Activated CD4-positive, alpha-beta T cell treated with anti-CD3 and anti-CD28 coated beads for 36 hours (primary cell): ENCODE measurements at regions of chr1 and their contacts with region 1.

Region 1: GRCh38 chr1:154936555-154937084 is at the start of gene PMVK:
- DNase-seq: peak; percentile 97
- ATAC-seq: peak; percentile 80
- H3K4me3 Mint-ChIP-seq: peak within 1 kb of the TSS; percentile 95
- H3K27ac Mint-ChIP-seq: peak within 1 kb of the TSS; percentile 96
- H3K4me1 Mint-ChIP-seq: peaks cover 54% of the 10 kb centered on the region
- H3K27me3 Mint-ChIP-seq: no peaks in the 10 kb centered on the region
- total RNA-seq, gene PMVK: 17.0 to 36.9 TPM

Region 2: DNA sequence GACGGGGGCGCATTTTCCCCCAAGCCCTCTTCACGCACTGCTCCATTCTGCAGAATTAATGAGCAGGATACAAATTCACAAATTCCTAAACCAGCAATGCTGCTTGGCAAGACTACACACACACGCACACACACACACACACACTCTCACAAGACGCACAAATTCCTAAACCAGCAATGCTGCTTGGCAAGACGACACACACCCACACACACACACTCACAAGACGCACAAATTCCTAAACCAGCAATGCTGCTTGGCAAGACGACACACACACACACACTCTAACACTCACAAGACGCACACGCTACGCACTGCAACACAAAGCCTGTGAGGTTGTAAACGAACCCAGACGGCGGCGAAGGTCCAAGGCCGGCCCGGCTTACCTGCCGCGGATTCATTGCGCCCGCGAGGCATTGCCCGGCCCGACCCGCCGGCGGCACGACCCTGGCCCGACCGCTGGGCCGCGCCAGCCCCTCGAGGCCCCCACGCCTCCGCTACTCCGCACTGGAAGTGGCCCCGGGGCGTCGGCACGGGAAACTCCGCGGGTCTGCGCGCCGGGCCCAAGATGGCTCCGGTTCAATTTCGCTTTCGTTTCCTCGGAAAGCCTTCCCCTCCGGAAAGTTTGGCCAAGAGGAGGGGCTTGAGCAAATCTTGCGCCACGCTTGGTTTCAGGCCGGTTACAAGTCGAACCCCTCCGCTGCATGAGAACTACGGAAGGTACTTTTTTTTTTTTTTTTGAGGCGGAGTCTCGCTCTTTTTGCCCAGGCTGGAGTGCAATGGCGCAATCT is 328.8 kb before region 1 on chr1 and contains the start of gene ADAR:
- CTCF ChIA-PET with region 1: no interaction called
- POLR2A ChIA-PET with region 1: no interaction called
- intact Hi-C with region 1: loop called (anchors 1 to 2 kb)
- DNase-seq: peak; percentile 95
- ATAC-seq: peak; percentile 69
- H3K4me3 Mint-ChIP-seq: peak within 1 kb of the TSS; percentile 95
- H3K27ac Mint-ChIP-seq: peak within 1 kb of the TSS; percentile 99
- H3K4me1 Mint-ChIP-seq: peaks cover 75% of the 10 kb centered on the region
- H3K27me3 Mint-ChIP-seq: no peaks in the 10 kb centered on the region
- total RNA-seq, gene ADAR: 310 to 332 TPM

Region 3: GRCh38 chr1:154669464-154670282 is 266.9 kb before region 1 on chr1:
- CTCF ChIA-PET with region 1: no interaction called
- POLR2A ChIA-PET with region 1: interaction called, 3 read pairs
- intact Hi-C with region 1: loop called in 1 of 2 experiments (anchors 2 kb)
- DNase-seq: peak; percentile 88
- ATAC-seq: peak; percentile 100
- H3K4me3 Mint-ChIP-seq: no peak overlapping the region
- H3K27ac Mint-ChIP-seq: no peak overlapping the region
- H3K4me1 Mint-ChIP-seq: peaks cover 17% of the 10 kb centered on the region
- H3K27me3 Mint-ChIP-seq: peaks cover 2% of the 10 kb centered on the region

Region 4: DNA sequence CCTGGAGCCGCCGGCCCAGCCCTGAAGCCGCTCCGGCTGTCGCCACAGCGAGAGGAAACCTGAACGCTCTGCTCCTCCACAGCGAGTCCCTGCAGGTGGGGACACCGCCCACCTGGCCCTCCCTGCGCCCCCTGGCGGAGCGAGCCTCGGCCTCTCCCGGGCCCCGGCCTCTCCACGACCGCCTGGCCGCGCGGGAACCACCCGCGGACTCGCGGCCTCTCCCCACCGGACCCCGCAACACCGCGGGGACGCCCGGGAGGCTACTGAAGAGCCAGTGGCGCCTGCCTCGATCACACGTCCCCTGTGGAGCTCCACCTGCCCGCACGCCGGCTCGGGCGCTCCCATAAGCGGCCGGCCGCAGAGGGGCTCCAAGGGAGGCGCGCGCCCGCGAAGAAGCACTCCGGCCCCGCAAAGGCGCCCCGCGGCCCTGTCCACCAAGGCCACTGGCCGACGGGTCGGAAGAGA is 176.1 kb before region 1 on chr1:
- CTCF ChIA-PET with region 1: interaction called, 4 read pairs
- POLR2A ChIA-PET with region 1: no interaction called
- intact Hi-C with region 1: loop called in 1 of 2 experiments (anchors 2 kb)
- DNase-seq: peak; percentile 90
- ATAC-seq: peak; percentile 57
- H3K4me3 Mint-ChIP-seq: peak overlapping the region; percentile 69
- H3K27ac Mint-ChIP-seq: peak overlapping the region; percentile 97
- H3K4me1 Mint-ChIP-seq: peaks cover 51% of the 10 kb centered on the region
- H3K27me3 Mint-ChIP-seq: no peaks in the 10 kb centered on the region

Region 5: DNA sequence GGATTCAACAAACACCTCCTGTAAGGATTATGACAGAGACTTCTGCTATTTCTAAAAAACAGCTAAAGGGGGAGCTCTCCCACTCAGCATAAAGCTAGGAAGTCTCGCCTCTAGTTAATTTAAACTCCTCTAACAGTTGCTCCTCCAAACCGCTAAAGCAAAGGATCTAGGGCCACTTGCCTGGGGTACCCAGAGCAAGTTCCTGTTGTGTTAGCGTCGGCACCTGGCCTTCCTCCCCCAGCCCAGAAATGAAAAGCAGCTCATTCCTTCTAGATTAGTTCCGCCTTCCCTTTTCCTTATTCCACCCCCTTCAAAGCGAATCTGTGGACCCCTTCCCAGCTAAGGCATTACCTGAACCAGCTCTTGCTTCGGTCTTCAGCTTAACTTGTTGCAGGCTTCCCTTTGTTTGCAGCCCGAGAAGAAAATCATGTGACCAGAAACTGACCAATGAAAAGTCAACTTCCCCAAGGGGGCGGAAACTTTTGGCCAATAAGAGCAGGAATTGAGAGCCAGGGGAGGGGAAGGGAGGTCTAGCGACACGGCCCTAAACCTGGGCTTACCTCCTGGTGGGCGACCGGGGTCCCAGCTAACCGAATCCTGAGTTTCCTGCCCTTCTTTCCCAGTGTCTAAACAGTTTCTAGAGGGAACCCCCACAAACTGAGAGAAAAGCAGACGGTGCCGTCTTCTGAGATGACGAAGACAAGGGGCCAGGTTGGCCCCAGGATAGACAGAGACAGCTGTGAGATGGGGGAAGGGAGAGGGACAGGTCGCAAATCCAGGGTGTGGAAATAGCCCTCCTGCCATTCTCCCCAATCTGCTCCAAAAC is 19.3 kb after region 1 on chr1 and contains the start of gene PBXIP1:
- CTCF ChIA-PET with region 1: interaction called, 3 read pairs
- POLR2A ChIA-PET with region 1: interaction called, 11 read pairs
- intact Hi-C with region 1: loop called (anchors 1 to 2 kb)
- DNase-seq: peak; percentile 83
- ATAC-seq: peak; percentile 54
- H3K4me3 Mint-ChIP-seq: peak within 1 kb of the TSS; percentile 85
- H3K27ac Mint-ChIP-seq: peak within 1 kb of the TSS; percentile 95
- H3K4me1 Mint-ChIP-seq: peaks cover 82% of the 10 kb centered on the region
- H3K27me3 Mint-ChIP-seq: no peaks in the 10 kb centered on the region
- total RNA-seq, gene PBXIP1: 22.6 to 28.1 TPM

Region 6: DNA sequence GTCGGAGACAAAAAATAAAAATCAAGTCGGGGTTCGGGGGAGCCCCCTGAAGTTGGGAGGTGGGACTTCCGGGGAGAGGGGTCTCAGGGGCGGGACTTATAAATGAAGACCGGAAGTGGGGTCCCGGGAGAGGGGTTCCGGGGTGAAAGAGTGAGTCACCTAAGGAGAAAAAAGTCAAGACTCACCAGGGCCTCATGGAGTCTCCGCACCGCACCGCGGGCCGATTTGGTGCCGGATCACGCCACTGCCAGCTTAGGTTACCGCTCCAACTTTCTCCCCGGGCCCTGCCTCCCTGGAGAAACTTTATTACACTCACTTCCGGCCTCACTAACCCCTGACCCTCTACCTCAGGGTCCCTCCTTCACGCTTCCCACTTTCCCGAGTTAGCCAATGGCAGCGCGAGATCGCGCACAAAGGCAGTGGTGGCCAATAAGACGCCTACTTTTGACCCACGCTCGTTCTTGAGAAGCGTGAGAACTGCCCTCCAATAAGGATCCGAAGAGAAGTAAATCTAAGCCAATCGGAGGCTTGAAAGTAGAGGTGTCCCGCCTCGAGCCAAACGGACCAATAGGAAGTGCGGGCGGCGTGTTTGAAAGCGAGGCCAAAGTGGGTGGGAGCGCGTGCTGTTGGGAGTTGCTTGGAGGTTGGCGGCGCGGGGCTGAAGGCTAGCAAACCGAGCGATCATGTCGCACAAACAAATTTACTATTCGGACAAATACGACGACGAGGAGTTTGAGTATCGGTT is 37.6 kb after region 1 on chr1 and contains the start of gene CKS1B:
- CTCF ChIA-PET with region 1: interaction called, 4 read pairs
- POLR2A ChIA-PET with region 1: interaction called, 12 read pairs
- intact Hi-C with region 1: loop called (anchors 1 kb)
- DNase-seq: peak; percentile 98
- ATAC-seq: peak; percentile 86
- H3K4me3 Mint-ChIP-seq: no peak within 1 kb of the TSS
- H3K27ac Mint-ChIP-seq: no peak within 1 kb of the TSS
- H3K4me1 Mint-ChIP-seq: peaks cover 30% of the 10 kb centered on the region
- H3K27me3 Mint-ChIP-seq: no peaks in the 10 kb centered on the region
- total RNA-seq, gene CKS1B: 190 to 196 TPM

Region 7: GRCh38 chr1:155050560-155051341 is 114.1 kb after region 1 on chr1 and contains the start of gene ADAM15:
- CTCF ChIA-PET with region 1: interaction called, 4 read pairs
- POLR2A ChIA-PET with region 1: interaction called, 4 read pairs
- intact Hi-C with region 1: loop called in 1 of 2 experiments (anchors 1 kb)
- DNase-seq: peak; percentile 90
- ATAC-seq: peak; percentile 78
- H3K4me3 Mint-ChIP-seq: peak within 1 kb of the TSS; percentile 74
- H3K27ac Mint-ChIP-seq: peak within 1 kb of the TSS; percentile 80
- H3K4me1 Mint-ChIP-seq: peaks cover 20% of the 10 kb centered on the region
- H3K27me3 Mint-ChIP-seq: no peaks in the 10 kb centered on the region
- total RNA-seq, gene ADAM15: 42.4 to 48.8 TPM